Heart right ventricle (tissue), 16 donors: ENCODE measurements at regions of chr19 and their contacts with region 1.

Region 1: GRCh38 chr19:21698215-21698614 is 69.2 kb downstream of the ZNF100 start:
- DNase-seq: no peak
- ATAC-seq: peak in 2 of 8 donors; percentile 56 to 64
- H3K4me3 ChIP-seq: no peak overlapping the region
- H3K27ac ChIP-seq: no peak overlapping the region
- H3K4me1 ChIP-seq: no peaks in the 10 kb centered on the region
- H3K27me3 ChIP-seq: peaks cover 0 to 3% (median 0%) of the 10 kb centered on the region in 7 donors
- CTCF ChIP-seq: peak; percentile 53 to 79 (median 72)

Region 2: GRCh38 chr19:21202865-21203494 is 495.2 kb before region 1 on chr19:
- intact Hi-C with region 1: loop called in 8 of 10 experiments (anchors 2 to 10 kb)
- DNase-seq: peak in 1 of 2 donors; percentile 24
- ATAC-seq: peak in 3 of 8 donors; percentile 28 to 64 (median 51)
- H3K4me3 ChIP-seq: no peak overlapping the region
- H3K27ac ChIP-seq: no peak overlapping the region
- H3K4me1 ChIP-seq: no peaks in the 10 kb centered on the region
- H3K27me3 ChIP-seq: no peaks in the 10 kb centered on the region
- CTCF ChIP-seq: peak; percentile 45 to 79 (median 66)

Region 3: DNA sequence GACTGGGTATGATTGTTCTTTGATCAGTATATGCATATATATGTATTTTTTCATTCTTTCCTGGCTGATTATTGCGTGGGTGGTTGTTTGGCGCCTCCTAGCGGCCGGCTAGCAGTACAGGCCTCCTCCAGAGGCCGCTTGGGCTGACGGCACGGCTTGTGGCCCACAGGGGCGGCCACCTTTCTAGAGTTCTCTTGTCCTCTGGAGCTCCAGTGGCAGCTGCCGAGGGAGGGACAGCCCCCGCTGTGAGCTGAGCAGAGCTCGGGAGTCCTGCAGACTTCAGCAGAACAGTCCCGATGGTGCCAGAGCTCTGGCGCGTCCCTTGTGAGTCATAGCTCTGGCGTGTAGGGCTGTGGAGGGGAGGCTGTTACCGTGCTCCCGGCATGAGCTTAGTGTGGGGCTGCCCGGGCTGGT is 215.3 kb before region 1 on chr19:
- intact Hi-C with region 1: loop called in 7 of 10 experiments (anchors 2 to 10 kb)
- DNase-seq: peak; percentile 28 to 68
- ATAC-seq: peak; percentile 77 to 94 (median 89)
- H3K4me3 ChIP-seq: peak overlapping the region in 2 of 10 donors; percentile 15 to 22
- H3K27ac ChIP-seq: peak overlapping the region in 1 of 10 donors; percentile 31
- H3K4me1 ChIP-seq: no peaks in the 10 kb centered on the region
- H3K27me3 ChIP-seq: no peaks in the 10 kb centered on the region
- CTCF ChIP-seq: peak; percentile 78 to 92 (median 84)

Region 4: GRCh38 chr19:21492947-21493906 is 205.0 kb before region 1 on chr19:
- intact Hi-C with region 1: loop called in 4 of 10 experiments (anchors 10 kb)
- DNase-seq: no peak
- ATAC-seq: peak in 3 of 8 donors; percentile 46 to 57 (median 50)
- H3K4me3 ChIP-seq: no peak overlapping the region
- H3K27ac ChIP-seq: peak overlapping the region in 1 of 10 donors; percentile 72
- H3K4me1 ChIP-seq: no peaks in the 10 kb centered on the region
- H3K27me3 ChIP-seq: no peaks in the 10 kb centered on the region
- CTCF ChIP-seq: no peak

Region 5: DNA sequence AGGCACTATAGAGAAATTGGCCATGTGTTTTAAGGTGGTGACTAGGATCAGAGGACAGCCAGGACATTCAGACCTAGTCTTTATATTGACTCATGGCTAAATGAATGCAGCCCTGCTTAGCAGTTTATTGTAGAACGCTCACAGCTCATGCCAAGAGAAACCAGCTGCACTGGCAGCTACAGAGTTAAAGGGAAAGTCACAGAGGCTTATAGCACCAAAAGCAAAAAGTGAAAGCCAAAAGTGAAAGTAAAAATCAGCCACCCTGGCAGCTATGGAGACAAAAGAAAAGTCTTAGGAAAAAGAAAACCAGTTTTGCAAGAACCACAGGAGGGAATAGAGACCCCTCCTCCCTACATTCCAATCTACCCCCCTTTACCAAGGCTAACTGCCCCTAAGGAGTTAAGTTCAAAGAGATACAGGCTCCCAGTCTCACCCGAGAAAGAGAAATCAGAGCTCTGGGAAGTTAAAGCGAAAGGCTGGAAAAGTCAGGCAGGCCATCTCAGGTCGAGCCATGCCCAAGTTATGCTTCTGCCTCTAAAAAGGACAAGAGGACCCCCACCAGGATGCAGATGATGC is 93.8 kb before region 1 on chr19:
- intact Hi-C with region 1: loop called in 1 of 10 experiments (anchors 10 kb)
- DNase-seq: peak in 1 of 2 donors; percentile 14
- ATAC-seq: peak; percentile 26 to 65 (median 48)
- H3K4me3 ChIP-seq: peak overlapping the region; percentile 25 to 60 (median 49)
- H3K27ac ChIP-seq: peak overlapping the region; percentile 62 to 92 (median 80)
- H3K4me1 ChIP-seq: peaks cover 6 to 34% (median 23%) of the 10 kb centered on the region in 9 donors
- H3K27me3 ChIP-seq: no peaks in the 10 kb centered on the region
- CTCF ChIP-seq: no peak

Region 6: DNA sequence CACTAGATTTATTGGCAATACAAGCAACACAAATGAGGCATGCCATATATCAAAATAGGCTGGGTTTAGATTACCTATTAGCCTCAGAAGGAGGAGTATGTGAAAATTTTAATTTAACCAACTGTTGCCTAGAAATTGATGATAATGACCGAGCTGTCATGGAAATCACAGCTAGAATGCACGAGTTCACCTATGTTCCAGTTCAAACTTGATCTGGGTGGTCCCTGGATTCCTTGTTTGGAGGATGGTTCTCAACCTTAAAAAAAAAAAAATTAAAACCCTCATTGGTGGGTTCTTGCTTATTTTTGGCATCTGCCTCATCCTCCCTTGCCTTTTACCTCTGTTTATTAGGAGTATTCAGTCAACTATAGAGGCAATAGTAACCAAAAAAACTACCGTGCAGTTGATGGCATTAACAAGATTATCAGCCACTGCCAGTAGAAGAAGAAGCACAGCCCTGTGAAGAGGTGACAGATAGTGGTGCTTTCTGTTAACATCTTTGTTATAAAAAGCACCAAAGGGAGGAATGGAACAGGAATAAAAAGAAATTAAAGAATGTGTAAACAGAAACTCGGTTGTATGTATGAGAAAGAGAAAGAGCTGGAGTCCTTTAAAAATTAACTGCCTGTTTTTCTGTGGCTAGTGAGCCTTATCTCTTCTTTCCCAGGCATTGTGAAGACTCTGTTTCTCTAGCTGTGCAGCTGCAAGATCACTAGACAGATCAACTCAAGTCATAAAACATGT is 86.4 kb before region 1 on chr19:
- intact Hi-C with region 1: loop called in 2 of 10 experiments (anchors 10 kb)
- DNase-seq: no peak
- ATAC-seq: no peak
- H3K4me3 ChIP-seq: no peak overlapping the region
- H3K27ac ChIP-seq: peak overlapping the region in 4 of 10 donors; percentile 39 to 64 (median 44)
- H3K4me1 ChIP-seq: no peaks in the 10 kb centered on the region
- H3K27me3 ChIP-seq: no peaks in the 10 kb centered on the region
- CTCF ChIP-seq: no peak

Region 7: GRCh38 chr19:21655540-21656126 is 42.6 kb before region 1 on chr19:
- intact Hi-C with region 1: no loop called
- DNase-seq: no peak
- ATAC-seq: no peak
- H3K4me3 ChIP-seq: no peak overlapping the region
- H3K27ac ChIP-seq: no peak overlapping the region
- H3K4me1 ChIP-seq: no peaks in the 10 kb centered on the region
- H3K27me3 ChIP-seq: no peaks in the 10 kb centered on the region
- CTCF ChIP-seq: no peak